ENCODE measurements at regions of chr13 and their contacts with region 1.

Region 1: DNA sequence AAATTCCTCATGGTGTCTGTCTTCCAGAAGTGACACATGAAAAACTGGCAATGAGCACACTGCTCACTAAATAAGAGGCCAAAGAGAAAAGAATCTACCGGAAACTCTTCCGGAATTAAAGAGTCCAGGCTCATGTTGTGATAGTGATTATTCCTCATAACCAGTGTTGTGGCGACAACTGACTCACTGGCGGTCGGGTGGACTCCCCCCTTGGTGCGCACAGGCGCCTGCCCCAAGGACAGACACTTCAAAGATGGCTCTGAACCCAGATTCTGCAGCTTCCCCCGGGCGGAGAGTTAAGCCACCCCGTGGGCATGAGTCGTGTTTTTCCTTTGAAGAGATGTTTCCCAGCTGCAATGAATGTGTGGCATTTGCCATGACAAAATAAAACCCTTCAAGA is 10.3 kb downstream of the IL17D start:
- DNase-seq: no peak
- H3K4me3 ChIP-seq: no peak overlapping the region
- H3K4me3 Mint-ChIP-seq: no peak overlapping the region
- H3K27ac ChIP-seq: no peak overlapping the region
- H3K27ac Mint-ChIP-seq: no peak overlapping the region
- H3K4me1 ChIP-seq: no peaks in the 10 kb centered on the region
- H3K4me1 Mint-ChIP-seq: peaks cover 6% of the 10 kb centered on the region
- H3K27me3 ChIP-seq: peaks cover 0 to 2% of the 10 kb centered on the region in 2 donors
- H3K27me3 Mint-ChIP-seq: peaks cover 6 to 22% (median 6%) of the 10 kb centered on the region in 3 donors
- CTCF ChIP-seq: no peak

Region 2: DNA sequence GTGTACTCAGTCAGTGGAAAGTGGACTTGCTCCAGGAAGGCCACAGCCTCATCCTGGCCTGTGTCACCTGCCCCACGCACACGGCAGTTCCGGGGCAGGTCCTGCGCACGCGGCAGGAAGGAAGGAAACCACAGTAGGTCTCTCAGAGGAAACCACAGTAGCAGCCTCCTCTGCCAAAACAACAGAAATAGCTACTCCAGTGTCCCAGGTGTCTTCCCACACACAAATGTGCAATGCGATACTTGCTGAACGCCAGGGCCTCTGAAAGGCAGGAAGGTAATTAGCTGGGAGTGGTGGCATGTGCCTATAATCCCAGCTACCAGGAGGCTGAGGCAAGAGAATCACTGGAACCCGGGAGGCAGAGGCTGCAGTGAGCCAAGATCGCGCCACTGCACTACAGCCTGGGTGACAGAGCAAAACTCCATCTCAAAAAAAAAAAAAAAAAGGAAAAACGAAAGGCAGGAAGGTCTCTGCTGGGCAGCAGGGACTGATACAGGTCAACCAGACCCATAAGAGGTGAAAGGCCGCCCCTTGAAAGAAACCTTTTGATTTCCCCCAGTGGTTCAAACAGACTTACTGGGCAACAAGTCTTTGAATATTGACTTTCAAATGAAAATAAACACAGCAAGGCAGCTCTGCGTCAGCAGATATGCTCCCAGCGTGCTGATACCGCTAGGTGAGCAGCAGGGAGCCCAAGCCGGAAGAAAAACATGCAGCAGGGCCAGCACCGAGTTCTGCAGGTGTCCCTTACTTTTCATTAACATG is 237.6 kb before region 1 on chr13:
- intact Hi-C with region 1: no loop called
- DNase-seq: no peak
- H3K4me3 ChIP-seq: no peak overlapping the region
- H3K4me3 Mint-ChIP-seq: no peak overlapping the region
- H3K27ac ChIP-seq: no peak overlapping the region
- H3K27ac Mint-ChIP-seq: peak overlapping the region in 1 of 7 donors; percentile 42
- H3K4me1 ChIP-seq: no peaks in the 10 kb centered on the region
- H3K4me1 Mint-ChIP-seq: peaks cover 9% of the 10 kb centered on the region
- H3K27me3 ChIP-seq: no peaks in the 10 kb centered on the region
- H3K27me3 Mint-ChIP-seq: peaks cover 0 to 2% (median 2%) of the 10 kb centered on the region in 3 donors
- CTCF ChIP-seq: no peak

Region 3: GRCh38 chr13:20566898-20567874 is 146.6 kb before region 1 on chr13 and contains the start of gene IFT88:
- intact Hi-C with region 1: no loop called
- DNase-seq: peak; percentile 76 to 78 (median 77)
- H3K4me3 ChIP-seq: peak within 1 kb of the TSS; percentile 61 to 86 (median 79)
- H3K4me3 Mint-ChIP-seq: peak within 1 kb of the TSS; percentile 89 to 93
- H3K27ac ChIP-seq: peak within 1 kb of the TSS; percentile 90 to 92
- H3K27ac Mint-ChIP-seq: peak within 1 kb of the TSS; percentile 89 to 97 (median 95)
- H3K4me1 ChIP-seq: peaks cover 18 to 20% of the 10 kb centered on the region in 2 donors
- H3K4me1 Mint-ChIP-seq: peaks cover 20% of the 10 kb centered on the region
- H3K27me3 ChIP-seq: no peaks in the 10 kb centered on the region
- H3K27me3 Mint-ChIP-seq: peaks cover 0 to 2% (median 2%) of the 10 kb centered on the region in 3 donors
- CTCF ChIP-seq: no peak
- polyA plus RNA-seq, gene IFT88: 2.9 to 4.5 (median 4.1) TPM

Region 4: GRCh38 chr13:20828539-20829364 is 115.0 kb after region 1 on chr13:
- intact Hi-C with region 1: loop called in 1 of 2 experiments (anchors 5 kb)
- DNase-seq: peak; percentile 38 to 60 (median 53)
- H3K4me3 ChIP-seq: peak overlapping the region in 2 of 3 experiments; percentile 30 to 45
- H3K4me3 Mint-ChIP-seq: peak overlapping the region in 1 of 2 donors; percentile 73
- H3K27ac ChIP-seq: no peak overlapping the region
- H3K27ac Mint-ChIP-seq: peak overlapping the region in 3 of 7 donors; percentile 40 to 50 (median 41)
- H3K4me1 ChIP-seq: no peaks in the 10 kb centered on the region
- H3K4me1 Mint-ChIP-seq: peaks cover 6% of the 10 kb centered on the region
- H3K27me3 ChIP-seq: no peaks in the 10 kb centered on the region
- H3K27me3 Mint-ChIP-seq: no peaks in the 10 kb centered on the region
- CTCF ChIP-seq: peak; percentile 81